ENCODE measurements at regions of chr11 and their contacts with region 1.

Region 1: GRCh38 chr11:62108017-62108750 is 15.6 kb upstream of the INCENP start:
- DNase-seq: peak; percentile 42
- H3K4me3 ChIP-seq: no peak overlapping the region
- H3K27ac ChIP-seq: no peak overlapping the region
- H3K4me1 ChIP-seq: peaks cover 7% of the 10 kb centered on the region
- H3K27me3 ChIP-seq: no peaks in the 10 kb centered on the region
- CTCF ChIP-seq: peak; percentile 76 to 77

Region 2: DNA sequence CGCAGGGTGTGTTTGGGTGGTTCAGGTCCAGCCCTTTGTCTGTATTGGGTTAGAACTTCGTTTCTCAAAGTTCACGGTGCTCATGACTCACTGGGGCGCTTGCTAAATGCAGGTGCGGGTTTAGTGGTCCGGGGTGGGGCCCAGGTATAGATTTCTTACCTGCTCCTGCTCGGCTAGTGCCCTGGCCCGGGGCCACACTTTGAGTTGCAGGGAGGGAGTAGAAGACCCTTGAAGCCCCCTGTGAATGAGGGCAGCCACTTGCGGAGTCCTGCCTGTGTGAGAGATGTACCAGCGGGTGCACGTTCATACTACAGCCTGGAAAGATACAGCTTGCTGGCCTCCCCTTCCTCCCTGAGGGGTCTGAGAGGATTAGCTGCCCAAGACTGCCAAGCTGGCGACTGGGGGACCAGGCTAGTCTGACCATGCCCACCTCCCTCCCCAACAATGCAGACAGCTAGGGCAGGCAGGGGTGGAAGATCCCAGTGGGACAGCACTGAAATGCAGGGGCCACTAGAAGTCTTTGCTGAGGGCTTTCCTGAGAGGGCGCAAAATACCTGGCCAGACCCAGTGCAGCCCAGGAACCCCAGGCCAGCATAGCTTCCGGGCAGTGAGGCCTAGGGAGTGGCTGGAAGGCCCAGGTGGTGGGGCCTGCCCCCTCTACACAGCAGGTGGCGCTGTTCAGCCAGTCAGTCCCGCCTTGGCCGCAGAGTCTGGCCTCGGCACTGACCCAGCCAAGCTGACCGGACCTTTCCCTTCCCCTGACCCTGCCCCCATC is 360.8 kb before region 1 on chr11:
- CTCF ChIA-PET with region 1: no interaction called
- dilution Hi-C with region 1: no loop called
- in situ Hi-C with region 1: no loop called
- intact Hi-C with region 1: loop called (anchors 2 kb)
- DNase-seq: peak; percentile 31
- H3K4me3 ChIP-seq: no peak overlapping the region
- H3K27ac ChIP-seq: no peak overlapping the region
- H3K4me1 ChIP-seq: no peaks in the 10 kb centered on the region
- H3K27me3 ChIP-seq: no peaks in the 10 kb centered on the region
- CTCF ChIP-seq: peak; percentile 80 to 87

Region 3: GRCh38 chr11:61899146-61899841 is 208.9 kb before region 1 on chr11:
- CTCF ChIA-PET with region 1: no interaction called
- dilution Hi-C with region 1: loop called (anchors 5 kb)
- in situ Hi-C with region 1: no loop called
- intact Hi-C with region 1: loop called (anchors 1 kb)
- DNase-seq: peak; percentile 52
- H3K4me3 ChIP-seq: no peak overlapping the region
- H3K27ac ChIP-seq: no peak overlapping the region
- H3K4me1 ChIP-seq: peaks cover 19% of the 10 kb centered on the region
- H3K27me3 ChIP-seq: no peaks in the 10 kb centered on the region
- CTCF ChIP-seq: peak; percentile 96 to 99

Region 4: DNA sequence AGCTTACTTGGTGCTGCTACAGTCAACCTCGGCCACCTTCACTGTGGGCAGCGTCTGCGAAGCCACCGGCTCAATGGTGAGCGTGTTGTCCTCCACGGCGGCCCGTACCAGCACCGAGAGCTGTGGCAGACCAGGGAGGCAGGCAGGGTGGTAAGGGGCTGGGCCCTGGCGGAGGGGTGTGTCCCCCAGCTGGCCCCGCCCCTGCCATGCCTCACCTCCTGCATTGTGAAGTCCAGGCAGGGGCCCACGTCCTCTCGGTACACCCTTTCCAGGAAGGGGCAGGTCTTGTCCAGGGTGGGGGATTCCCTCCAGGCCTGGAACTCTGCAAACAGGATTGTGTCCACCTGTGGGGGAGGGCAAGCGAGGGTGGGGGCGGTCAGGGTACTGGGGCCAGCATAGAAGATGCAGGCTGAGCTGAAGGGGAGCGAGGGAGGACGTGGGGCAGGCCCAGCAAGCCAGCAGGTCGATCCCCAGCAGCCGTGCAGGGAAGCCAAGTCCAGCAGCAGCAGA is 203.6 kb before region 1 on chr11:
- CTCF ChIA-PET with region 1: no interaction called
- dilution Hi-C with region 1: loop called (anchors 5 kb)
- in situ Hi-C with region 1: no loop called
- intact Hi-C with region 1: no loop called
- DNase-seq: no peak
- H3K4me3 ChIP-seq: no peak overlapping the region
- H3K27ac ChIP-seq: no peak overlapping the region
- H3K4me1 ChIP-seq: no peaks in the 10 kb centered on the region
- H3K27me3 ChIP-seq: no peaks in the 10 kb centered on the region
- CTCF ChIP-seq: no peak

Region 5: DNA sequence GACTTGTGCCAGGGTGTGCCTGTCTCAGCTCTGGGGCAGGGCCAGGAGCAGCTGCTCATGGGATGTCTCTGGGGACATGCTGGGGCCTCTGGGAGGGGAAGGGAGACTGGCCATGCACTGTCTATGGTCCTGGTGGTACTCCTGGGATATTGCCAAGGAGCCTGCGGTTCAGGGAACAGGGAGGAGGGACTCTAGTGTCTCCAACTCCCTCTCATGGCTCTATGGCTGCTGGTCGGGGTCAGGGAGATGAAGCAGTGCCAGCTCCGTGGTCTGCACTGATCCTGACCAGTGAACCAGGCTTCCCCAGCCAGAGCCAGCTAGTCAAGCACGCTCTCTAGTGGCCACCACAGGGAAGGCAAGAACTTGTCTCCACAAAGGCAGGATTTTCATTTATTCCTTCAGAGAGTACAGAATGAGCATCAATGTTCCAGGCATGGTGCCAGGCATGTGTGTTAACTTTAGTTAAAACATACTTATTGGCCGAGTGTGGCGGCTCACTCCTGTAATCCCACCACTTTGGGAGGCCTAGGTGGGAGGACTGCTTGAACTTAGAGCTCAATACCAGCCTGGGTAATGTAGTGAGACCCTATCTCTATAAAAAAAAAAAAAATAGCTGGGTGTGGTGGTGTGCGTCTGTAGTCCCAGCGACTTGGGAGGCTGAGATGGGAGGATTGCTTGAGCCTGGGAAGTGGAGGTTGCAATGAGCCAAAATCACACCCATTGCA is 160.5 kb before region 1 on chr11:
- CTCF ChIA-PET with region 1: no interaction called
- dilution Hi-C with region 1: no loop called
- in situ Hi-C with region 1: no loop called
- intact Hi-C with region 1: loop called (anchors 2 kb)
- DNase-seq: peak; percentile 59
- H3K4me3 ChIP-seq: no peak overlapping the region
- H3K27ac ChIP-seq: no peak overlapping the region
- H3K4me1 ChIP-seq: no peaks in the 10 kb centered on the region
- H3K27me3 ChIP-seq: no peaks in the 10 kb centered on the region
- CTCF ChIP-seq: peak; percentile 97 to 98

Region 6: GRCh38 chr11:62054484-62055121 is 53.6 kb before region 1 on chr11:
- CTCF ChIA-PET with region 1: interaction called, 3 read pairs
- dilution Hi-C with region 1: loop called (anchors 5 kb)
- in situ Hi-C with region 1: no loop called
- intact Hi-C with region 1: no loop called
- DNase-seq: peak; percentile 42
- H3K4me3 ChIP-seq: no peak overlapping the region
- H3K27ac ChIP-seq: no peak overlapping the region
- H3K4me1 ChIP-seq: peaks cover 8% of the 10 kb centered on the region
- H3K27me3 ChIP-seq: no peaks in the 10 kb centered on the region
- CTCF ChIP-seq: peak; percentile 74 to 87

Region 7: DNA sequence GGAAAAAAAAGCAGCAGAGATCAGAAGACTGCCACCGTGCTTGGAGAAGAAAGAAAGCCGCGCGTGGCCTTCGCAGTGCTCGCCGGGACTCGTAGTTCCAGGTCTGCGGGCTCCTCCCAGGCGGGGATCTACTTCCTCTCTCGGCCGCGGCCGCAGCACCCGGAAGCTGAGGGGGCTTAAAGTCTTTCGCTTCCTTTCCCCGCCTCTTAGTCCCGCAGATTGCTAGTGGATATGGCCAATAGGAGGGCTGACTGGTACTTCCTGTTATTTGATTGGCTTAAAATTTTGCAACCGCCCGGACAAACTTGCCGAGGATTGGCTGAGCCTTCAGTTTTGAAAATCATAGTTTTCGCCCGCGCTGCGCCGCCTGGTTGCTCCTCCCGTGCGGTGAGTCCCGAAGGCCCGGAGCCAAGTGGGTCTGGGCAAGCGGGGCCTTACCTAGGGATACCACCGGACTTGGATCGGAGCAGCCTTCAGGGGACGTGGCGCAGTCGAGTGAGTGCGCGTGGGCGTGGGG is 15.5 kb after region 1 on chr11 and contains the start of gene INCENP:
- CTCF ChIA-PET with region 1: interaction called, 7 read pairs
- dilution Hi-C with region 1: no loop called
- in situ Hi-C with region 1: no loop called
- intact Hi-C with region 1: loop called (anchors 1 kb)
- DNase-seq: peak; percentile 97
- H3K4me3 ChIP-seq: peak within 1 kb of the TSS; percentile 52 to 98 (median 81)
- H3K27ac ChIP-seq: peak within 1 kb of the TSS; percentile 67
- H3K4me1 ChIP-seq: peaks cover 13% of the 10 kb centered on the region
- H3K27me3 ChIP-seq: no peaks in the 10 kb centered on the region
- CTCF ChIP-seq: no peak
- total RNA-seq, gene INCENP: 15.7 to 60.6 TPM